ENCODE measurements at regions of chr18 and their contacts with region 1.

Region 1: GRCh38 chr18:1585879-1586488 is 681.3 kb downstream of the ADCYAP1 start:
- DNase-seq: no peak
- ATAC-seq: no peak
- H3K4me3 ChIP-seq: no peak overlapping the region
- H3K4me1 ChIP-seq: no peaks in the 10 kb centered on the region
- CTCF ChIP-seq: no peak

Region 2: DNA sequence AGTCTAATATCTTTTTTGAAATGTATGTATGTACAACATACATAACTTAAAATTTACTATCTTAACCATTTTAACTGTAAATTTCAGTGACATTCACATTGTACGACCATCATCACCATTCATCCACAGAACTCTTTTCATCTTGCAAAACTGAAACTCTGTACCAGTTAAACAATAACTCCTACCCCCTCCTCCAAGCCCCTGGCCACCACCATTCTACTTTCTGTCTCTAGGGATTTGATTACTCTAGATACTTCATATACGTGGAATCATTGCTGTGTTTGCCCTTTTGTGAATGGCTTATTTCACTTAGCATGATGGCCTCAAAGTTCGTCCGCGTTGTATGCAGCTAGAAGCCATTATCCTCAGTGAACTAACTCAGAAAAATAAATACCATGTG is 768.3 kb after region 1 on chr18:
- intact Hi-C with region 1: no loop called
- DNase-seq: no peak
- ATAC-seq: no peak
- H3K4me3 ChIP-seq: no peak overlapping the region
- H3K4me1 ChIP-seq: no peaks in the 10 kb centered on the region
- CTCF ChIP-seq: no peak

Region 3: DNA sequence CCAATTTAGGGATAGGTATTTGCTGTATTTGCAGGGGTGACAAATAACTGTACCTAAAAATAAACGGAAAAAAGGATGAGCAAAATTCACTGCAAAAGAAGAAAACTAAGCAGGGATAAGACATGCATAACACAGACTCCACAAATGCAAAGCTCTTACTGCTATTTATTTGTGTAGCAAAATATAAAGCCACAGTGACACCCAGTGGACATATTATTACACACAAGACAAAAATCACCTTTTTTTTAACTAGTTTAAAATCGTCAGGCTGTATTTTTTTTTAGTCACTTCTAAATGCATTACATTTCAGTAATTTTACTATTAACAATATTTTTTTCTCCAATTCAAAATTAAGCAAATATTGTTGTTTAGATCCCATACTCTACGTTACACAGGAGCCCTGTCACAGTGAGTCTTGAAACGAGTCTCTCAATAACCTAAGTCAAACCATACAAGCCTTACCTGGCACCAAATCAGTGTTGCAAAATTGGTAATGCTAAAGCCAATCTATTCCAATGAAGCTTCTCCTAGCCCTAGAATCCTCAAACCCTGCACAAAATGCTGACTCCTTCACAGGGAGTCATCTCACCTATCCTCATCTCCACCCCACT is 961.6 kb after region 1 on chr18:
- intact Hi-C with region 1: loop called in 1 of 2 experiments (anchors 10 kb)
- DNase-seq: peak in 1 of 3 donors; percentile 18
- ATAC-seq: peak; percentile 61
- H3K4me3 ChIP-seq: no peak overlapping the region
- H3K4me1 ChIP-seq: no peaks in the 10 kb centered on the region
- CTCF ChIP-seq: no peak